Activated CD4-positive, alpha-beta memory T cell treated with anti-CD3 and anti-CD28 coated beads for 36 hours (primary cell): ENCODE measurements at regions of chr16 and their contacts with region 1.

Region 1: DNA sequence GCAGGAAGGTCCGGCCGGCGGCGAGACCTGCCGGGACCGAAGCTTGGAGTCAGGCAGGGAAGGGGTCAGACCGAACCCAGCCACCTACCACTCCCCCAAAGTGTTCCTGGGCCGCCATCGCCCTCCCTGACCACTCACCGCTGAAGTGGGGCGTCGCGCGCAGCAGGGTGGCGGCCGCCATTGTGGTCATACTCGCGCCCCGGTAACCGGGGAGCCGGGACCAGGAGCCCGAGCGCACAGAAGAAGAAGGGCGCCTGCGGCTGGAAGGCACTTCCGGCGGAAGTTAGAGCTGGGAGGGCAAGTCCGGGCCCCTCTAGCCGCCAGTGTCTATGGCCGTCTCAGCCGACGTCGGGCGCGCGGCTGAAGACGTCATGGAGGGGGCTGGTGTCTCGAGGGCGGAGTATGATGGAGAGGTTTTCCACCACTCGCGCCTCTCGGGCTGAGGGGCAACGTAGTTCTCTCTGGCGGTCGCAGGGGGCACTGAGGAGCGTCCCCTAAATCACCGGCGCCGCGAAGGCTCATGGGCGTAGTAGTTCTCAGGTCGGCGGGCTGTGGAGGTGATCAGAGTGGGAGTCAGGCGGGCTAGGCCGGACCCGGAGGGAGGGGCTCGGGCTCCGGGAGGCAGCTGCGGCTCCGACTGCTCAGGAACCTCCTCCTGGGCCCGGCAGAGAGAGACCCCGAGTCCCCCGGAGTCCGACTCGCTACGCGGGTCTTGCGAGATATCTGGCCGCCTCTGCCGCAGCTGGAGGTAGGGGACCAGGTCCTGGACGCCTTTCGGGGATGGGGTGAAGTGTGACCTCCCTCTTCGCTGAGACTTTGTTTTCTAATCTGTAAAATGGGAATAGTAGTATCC is at the start of gene TUFM:
- DNase-seq: peak; percentile 99
- H3K4me3 Mint-ChIP-seq: peak within 1 kb of the TSS; percentile 89
- H3K27ac Mint-ChIP-seq: peak within 1 kb of the TSS; percentile 94
- H3K4me1 Mint-ChIP-seq: peaks cover 24% of the 10 kb centered on the region
- H3K27me3 Mint-ChIP-seq: no peaks in the 10 kb centered on the region
- total RNA-seq, gene TUFM: 221 TPM

Region 2: DNA sequence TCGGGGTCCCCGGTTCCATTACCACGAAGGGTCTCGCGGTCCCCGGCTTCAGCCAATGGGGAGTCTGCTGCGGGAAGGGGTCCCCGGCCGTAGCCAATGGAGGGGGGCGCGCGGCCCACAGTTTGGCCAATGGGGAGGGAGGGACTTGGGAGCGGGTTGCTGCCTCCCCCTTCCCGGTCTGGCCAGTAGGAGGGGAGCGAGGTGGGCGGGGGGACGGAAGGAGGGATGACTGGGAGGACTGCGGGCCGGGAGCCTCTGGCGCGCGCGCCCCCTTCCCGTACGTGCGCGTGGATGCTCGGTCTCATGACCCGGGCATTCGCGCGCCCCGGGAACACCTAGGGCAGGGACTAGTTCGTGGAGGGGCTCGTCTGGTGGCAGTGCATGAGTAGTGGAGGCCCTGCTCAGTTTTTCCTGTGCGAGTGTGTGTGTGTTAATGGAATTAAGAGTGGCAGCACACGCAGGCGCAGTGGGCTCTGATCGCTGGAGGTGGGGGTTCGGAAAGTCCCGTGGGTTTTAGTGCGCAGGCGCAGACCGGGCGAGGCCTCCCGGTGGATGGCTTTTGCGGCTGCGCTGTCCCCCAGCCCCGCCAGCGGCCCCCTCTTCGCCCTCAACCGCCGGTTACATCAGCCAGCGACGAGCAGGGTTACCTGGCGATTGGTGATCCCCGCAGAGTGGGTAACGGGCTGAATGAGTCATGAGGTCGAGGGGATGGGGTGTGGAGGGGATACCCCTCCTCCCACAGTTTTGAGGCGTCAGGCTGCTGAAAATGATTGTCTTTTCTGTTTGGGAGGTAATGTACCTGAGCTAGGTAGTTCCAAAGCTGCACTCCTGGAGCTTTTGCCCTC is 22.2 kb before region 1 on chr16:
- CTCF ChIA-PET with region 1: interaction called, 10 read pairs
- POLR2A ChIA-PET with region 1: interaction called, 37 read pairs
- intact Hi-C with region 1: loop called (anchors 1 kb)
- DNase-seq: peak; percentile 98
- H3K4me3 Mint-ChIP-seq: peak overlapping the region; percentile 94
- H3K27ac Mint-ChIP-seq: peak overlapping the region; percentile 99
- H3K4me1 Mint-ChIP-seq: peaks cover 39% of the 10 kb centered on the region
- H3K27me3 Mint-ChIP-seq: no peaks in the 10 kb centered on the region

Region 3: GRCh38 chr16:28832075-28832474 is 14.2 kb before region 1 on chr16:
- CTCF ChIA-PET with region 1: interaction called, 9 read pairs
- POLR2A ChIA-PET with region 1: interaction called, 11 read pairs
- intact Hi-C with region 1: no loop called
- DNase-seq: no peak
- H3K4me3 Mint-ChIP-seq: no peak overlapping the region
- H3K27ac Mint-ChIP-seq: no peak overlapping the region
- H3K4me1 Mint-ChIP-seq: peaks cover 7% of the 10 kb centered on the region
- H3K27me3 Mint-ChIP-seq: no peaks in the 10 kb centered on the region

Region 4: GRCh38 chr16:28879841-28880588 is 33.7 kb after region 1 on chr16:
- CTCF ChIA-PET with region 1: no interaction called
- POLR2A ChIA-PET with region 1: no interaction called
- intact Hi-C with region 1: loop called (anchors 1 kb)
- DNase-seq: peak; percentile 96
- H3K4me3 Mint-ChIP-seq: peak overlapping the region; percentile 88
- H3K27ac Mint-ChIP-seq: peak overlapping the region; percentile 13
- H3K4me1 Mint-ChIP-seq: peaks cover 20% of the 10 kb centered on the region
- H3K27me3 Mint-ChIP-seq: peaks cover 7% of the 10 kb centered on the region